ENCODE measurements at regions of chrX and their contacts with region 1.

Region 1: DNA sequence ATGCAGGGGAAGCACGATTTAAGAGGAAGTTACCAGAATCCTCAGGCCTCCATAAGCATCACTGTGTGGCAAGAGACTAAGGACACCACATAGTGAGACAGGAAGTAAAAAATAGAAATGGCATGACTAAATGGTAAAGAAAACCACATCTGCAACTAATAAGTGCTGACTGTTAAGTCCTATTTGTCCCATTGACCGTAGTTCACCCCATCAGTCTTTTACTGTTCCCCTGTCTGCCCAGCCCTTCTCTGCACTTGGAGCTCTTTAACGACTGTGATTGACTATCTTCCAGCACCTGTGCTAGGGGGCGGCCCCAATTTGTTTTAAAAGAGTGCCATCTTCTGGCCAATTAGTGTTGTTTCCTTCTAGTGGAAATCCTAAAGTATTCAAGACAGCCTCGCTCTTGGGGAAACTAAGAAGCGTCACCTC is 94.2 kb downstream of the MAOA start:
- DNase-seq: peak in 4 of 10 donors; percentile 5 to 44 (median 32)
- H3K4me3 ChIP-seq: no peak overlapping the region
- H3K27ac ChIP-seq: no peak overlapping the region
- H3K27me3 ChIP-seq: peaks cover 0 to 65% (median 8%) of the 10 kb centered on the region in 45 donors
- CTCF ChIP-seq: peak; percentile 17 to 82 (median 63)

Region 2: DNA sequence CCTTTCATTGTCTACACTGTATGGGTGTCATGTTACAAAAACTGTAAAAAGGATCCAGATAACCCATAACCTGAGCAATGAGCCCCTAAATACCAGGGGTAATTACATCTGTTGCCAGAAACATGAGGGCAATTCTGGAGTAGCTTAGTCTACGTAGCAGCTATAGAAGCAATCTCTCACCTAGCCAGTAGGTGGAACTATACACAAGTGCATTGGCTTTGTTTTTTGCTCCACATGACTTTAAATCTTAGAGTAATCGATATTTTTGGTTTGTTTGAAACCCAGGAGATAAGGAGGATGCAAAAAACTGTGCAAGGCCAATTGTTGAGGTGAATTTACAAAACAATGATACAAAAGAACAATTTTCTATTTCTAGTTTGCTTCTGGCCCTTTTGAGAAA is 1968.8 kb before region 1 on chrX:
- intact Hi-C with region 1: loop called in 1 of 2 experiments (anchors 10 kb)
- DNase-seq: no peak
- H3K4me3 ChIP-seq: no peak overlapping the region
- H3K27ac ChIP-seq: no peak overlapping the region
- H3K27me3 ChIP-seq: peaks cover 0 to 55% (median 11%) of the 10 kb centered on the region in 45 donors
- CTCF ChIP-seq: peak in 55 of 56 donors; percentile 32 to 74 (median 58)

Region 3: DNA sequence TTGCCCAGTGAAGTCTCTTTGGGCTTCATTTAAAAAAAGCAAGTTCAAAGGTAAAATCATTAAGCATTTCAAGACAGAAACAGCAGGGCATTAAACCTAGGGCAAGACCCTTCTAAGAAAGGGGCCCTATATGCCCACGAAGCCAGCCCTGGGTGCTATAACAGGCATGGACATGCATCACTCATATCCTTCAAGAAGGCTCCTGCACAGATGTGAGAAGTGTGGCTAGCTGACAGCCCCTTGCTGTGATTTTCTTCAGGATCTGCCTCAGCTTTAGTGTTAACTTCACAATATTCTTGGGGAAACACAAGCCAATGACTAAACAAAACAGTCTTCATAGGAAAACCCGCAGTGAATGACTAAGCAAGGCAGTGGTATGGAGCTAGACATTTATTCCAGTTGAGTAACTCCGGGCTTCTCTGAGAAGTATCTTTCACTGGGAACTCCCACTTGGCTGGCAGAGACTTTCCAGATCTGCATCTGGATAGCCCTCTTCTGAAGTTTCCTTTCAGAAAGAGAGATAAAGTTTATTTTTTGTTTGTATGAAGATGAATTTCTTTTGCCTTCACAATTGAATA is 106.0 kb before region 1 on chrX:
- intact Hi-C with region 1: no loop called
- DNase-seq: no peak
- H3K4me3 ChIP-seq: no peak overlapping the region
- H3K27ac ChIP-seq: no peak overlapping the region
- H3K27me3 ChIP-seq: peaks cover 0 to 41% (median 3%) of the 10 kb centered on the region in 45 donors
- CTCF ChIP-seq: no peak

Measured in dorsolateral prefrontal cortex (tissue), 120 donors.